ENCODE measurements at regions of chr2 and their contacts with region 1.

Region 1: DNA sequence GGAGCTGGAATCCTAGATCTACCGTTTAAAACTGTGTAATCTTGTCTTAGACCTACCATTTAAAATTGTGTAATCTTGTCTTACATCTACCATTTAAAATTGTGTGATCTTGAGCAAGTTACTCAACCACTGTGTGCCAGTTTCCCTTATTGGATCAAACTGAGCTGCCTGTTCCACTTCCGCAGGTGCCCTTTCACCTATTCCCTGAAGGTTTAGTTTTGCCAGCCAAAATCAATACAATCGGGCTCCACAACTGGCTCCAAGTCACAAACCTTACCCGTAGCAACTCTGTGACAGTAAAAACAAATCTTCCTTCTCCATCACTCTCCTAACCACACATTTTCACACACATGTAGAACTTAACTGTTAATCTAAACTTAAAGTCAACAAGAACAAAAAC is 20.1 kb downstream of the DOCK10 start:
- DNase-seq: no peak
- H3K4me3 ChIP-seq: no peak overlapping the region
- H3K27ac ChIP-seq: no peak overlapping the region
- H3K4me1 ChIP-seq: peaks cover 21 to 42% (median 32%) of the 10 kb centered on the region in 4 experiments
- H3K27me3 ChIP-seq: no peaks in the 10 kb centered on the region

Region 2: GRCh38 chr2:225008935-225009334 is 13.3 kb before region 1 on chr2:
- CTCF ChIA-PET with region 1: interaction called, 12 read pairs
- POLR2A ChIA-PET with region 1: interaction called, 3 read pairs
- DNase-seq: peak; percentile 39 to 48 (median 40)
- H3K4me3 ChIP-seq: peak overlapping the region in 1 of 7 experiments; percentile 1
- H3K27ac ChIP-seq: peak overlapping the region in 1 of 2 experiments; percentile 30
- H3K4me1 ChIP-seq: peaks cover 0 to 26% (median 12%) of the 10 kb centered on the region in 4 experiments
- H3K27me3 ChIP-seq: no peaks in the 10 kb centered on the region

Region 3: DNA sequence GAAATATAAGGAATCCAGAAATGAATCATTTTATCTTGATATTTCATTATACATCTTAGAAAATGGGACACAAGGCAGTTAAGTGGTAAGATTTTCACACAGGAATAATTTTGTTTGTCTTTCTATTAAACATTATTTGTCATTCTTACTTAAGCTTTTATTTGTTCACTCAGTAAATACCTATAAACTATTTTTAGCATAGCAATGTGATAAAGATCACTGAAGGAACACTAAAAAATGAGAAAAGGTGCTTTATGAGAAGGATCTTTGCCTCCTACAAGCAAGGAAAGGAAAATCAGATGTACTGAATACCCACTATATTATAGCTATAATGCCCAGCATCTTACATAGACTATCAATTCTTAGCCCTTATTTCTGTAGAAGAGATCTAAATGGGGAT is 201.1 kb after region 1 on chr2:
- CTCF ChIA-PET with region 1: no interaction called
- POLR2A ChIA-PET with region 1: no interaction called
- DNase-seq: no peak
- H3K4me3 ChIP-seq: no peak overlapping the region
- H3K27ac ChIP-seq: no peak overlapping the region
- H3K4me1 ChIP-seq: no peaks in the 10 kb centered on the region
- H3K27me3 ChIP-seq: no peaks in the 10 kb centered on the region